Activated T-helper 1 cell treated with anti-CD3 and anti-CD28 coated beads, Interleukin-12 subunit alpha, Interleukin-12 subunit beta, Interleukin-2, Interleukin-4 antibody, amounts not matched to agents 30 ng/mL and 10 ng/mL and 1 ng/mL, durations not matched to agents 14 hours and 24 hours and 36 hours (primary cell): ENCODE measurements at regions of chr4 and their contacts with region 1.

Region 1: DNA sequence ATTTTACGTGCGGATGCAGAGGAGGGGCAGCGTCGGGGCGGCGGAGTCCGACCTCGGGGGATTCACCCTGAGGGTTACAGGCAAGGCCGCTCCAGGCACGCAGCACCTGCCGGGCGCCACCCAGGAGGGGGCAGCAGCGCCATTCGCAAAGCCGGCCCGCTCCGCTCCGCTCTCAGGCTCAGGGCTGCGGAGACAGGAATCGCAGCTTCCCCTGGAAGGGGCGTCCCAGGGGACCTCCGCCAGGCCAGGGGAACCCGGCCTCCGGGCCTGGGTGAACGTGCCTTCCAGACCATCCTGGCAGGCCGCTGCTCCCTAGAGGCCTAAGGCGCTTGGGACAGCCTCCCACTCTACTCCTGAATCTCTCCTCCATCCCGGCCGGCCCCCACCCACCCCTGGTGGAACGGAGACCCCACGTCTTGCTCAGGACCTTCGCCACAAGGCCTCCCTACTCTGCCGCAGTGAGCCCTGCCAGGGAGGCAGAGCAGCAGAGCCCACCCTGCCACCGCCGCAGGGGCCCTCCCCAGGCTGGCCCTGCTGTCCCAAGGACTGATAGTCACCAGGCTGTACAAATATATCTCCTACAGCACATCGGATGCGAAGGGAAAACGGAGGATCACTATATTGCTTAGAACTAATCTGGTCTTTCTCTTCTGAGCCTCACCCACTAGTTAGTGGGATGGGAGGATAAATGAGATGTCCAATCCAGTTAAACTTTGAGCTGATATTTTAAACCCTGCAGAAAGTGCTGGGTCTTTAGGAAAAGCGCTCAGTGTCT is 115.0 kb downstream of the SMIM20 start:
- DNase-seq: peak; percentile 60
- H3K4me3 Mint-ChIP-seq: no peak overlapping the region
- H3K27ac Mint-ChIP-seq: peak overlapping the region; percentile 65
- H3K4me1 Mint-ChIP-seq: peaks cover 19% of the 10 kb centered on the region
- H3K27me3 Mint-ChIP-seq: no peaks in the 10 kb centered on the region

Region 2: DNA sequence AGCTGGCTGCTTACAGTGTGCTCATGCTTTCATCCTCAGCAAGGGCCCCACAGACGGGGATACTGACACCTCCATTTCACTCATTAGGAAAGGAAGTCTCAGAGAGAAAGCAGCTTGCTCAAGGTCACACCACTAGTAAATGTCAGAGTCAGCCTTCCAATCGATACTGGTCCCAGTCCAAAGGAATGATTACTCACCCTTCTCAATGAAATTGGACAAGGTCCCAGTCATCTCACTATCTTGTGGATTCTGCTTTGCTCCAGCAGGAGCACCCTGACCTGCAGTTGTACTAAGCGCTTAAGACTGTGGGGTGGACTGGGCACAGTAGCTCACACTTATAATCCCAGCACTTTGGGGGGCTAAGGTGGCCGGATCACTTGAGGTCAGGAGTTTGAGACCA is 505.6 kb before region 1 on chr4:
- intact Hi-C with region 1: no loop called
- DNase-seq: no peak
- H3K4me3 Mint-ChIP-seq: no peak overlapping the region
- H3K27ac Mint-ChIP-seq: no peak overlapping the region
- H3K4me1 Mint-ChIP-seq: no peaks in the 10 kb centered on the region
- H3K27me3 Mint-ChIP-seq: no peaks in the 10 kb centered on the region

Region 3: GRCh38 chr4:25993395-25994185 is 35.4 kb before region 1 on chr4:
- intact Hi-C with region 1: loop called (anchors 1 kb)
- DNase-seq: no peak
- H3K4me3 Mint-ChIP-seq: no peak overlapping the region
- H3K27ac Mint-ChIP-seq: no peak overlapping the region
- H3K4me1 Mint-ChIP-seq: peaks cover 13% of the 10 kb centered on the region
- H3K27me3 Mint-ChIP-seq: peaks cover 2% of the 10 kb centered on the region

Region 4: GRCh38 chr4:26267087-26267486 is 238.1 kb after region 1 on chr4:
- intact Hi-C with region 1: no loop called
- DNase-seq: no peak
- H3K4me3 Mint-ChIP-seq: no peak overlapping the region
- H3K27ac Mint-ChIP-seq: no peak overlapping the region
- H3K4me1 Mint-ChIP-seq: peaks cover 17% of the 10 kb centered on the region
- H3K27me3 Mint-ChIP-seq: peaks cover 5% of the 10 kb centered on the region

Region 5: DNA sequence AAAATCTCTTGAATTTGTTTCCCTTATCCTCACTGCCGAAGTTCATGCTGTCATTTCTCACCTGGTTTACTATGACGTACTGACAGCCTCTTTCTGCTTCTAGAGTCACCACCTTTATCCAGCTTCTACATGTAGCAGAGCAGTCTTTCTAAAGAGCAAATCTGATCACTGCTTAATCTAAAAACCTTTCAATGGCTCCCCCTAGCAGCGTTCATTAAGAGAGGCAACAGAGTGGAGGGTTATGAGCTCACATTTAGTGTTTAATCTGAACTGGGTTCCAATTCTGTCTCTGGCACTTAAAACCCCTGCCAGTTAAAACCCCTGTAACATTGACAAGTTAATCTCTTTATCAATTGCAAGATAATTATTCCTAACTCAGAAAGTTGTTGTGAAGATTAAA is 296.2 kb after region 1 on chr4:
- intact Hi-C with region 1: loop called (anchors 1 kb)
- DNase-seq: peak; percentile 24
- H3K4me3 Mint-ChIP-seq: peak overlapping the region; percentile 85
- H3K27ac Mint-ChIP-seq: peak overlapping the region; percentile 80
- H3K4me1 Mint-ChIP-seq: peaks cover 47% of the 10 kb centered on the region
- H3K27me3 Mint-ChIP-seq: no peaks in the 10 kb centered on the region

Region 6: DNA sequence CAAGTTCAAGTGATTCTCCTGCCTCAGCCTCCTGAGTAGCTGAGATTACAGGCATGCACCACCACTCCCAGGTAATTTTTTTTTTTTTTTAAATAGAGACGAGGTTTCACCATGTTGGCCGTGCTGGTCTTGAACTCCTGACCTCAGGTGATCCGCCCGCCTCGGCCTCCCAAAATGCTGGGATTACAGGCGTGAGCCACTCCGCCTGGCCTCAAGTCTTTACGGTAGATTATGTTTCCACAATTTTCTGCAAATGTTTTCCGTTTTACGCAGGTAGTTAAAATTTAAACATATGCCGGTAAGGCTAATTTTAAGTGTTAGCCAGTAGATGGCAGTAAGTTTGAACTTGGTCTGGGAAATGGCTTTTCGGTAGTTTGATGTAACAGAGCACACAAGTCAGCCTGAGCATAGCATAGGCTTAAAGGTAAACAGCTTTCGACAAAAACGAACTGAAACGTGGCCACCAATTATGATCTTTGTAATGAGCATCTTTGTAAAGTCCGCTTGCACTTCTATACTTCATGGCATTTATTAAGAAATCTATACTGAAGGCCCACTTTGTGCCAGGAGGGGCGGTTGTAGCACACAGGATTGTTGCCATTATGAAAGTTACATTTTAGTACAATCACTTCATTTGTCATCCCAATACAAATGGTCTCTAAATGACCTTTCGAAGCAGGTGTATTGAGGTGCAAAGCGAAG is 430.2 kb after region 1 on chr4:
- intact Hi-C with region 1: loop called (anchors 1 kb)
- DNase-seq: no peak
- H3K4me3 Mint-ChIP-seq: no peak overlapping the region
- H3K27ac Mint-ChIP-seq: no peak overlapping the region
- H3K4me1 Mint-ChIP-seq: peaks cover 13% of the 10 kb centered on the region
- H3K27me3 Mint-ChIP-seq: peaks cover 2% of the 10 kb centered on the region

Region 7: DNA sequence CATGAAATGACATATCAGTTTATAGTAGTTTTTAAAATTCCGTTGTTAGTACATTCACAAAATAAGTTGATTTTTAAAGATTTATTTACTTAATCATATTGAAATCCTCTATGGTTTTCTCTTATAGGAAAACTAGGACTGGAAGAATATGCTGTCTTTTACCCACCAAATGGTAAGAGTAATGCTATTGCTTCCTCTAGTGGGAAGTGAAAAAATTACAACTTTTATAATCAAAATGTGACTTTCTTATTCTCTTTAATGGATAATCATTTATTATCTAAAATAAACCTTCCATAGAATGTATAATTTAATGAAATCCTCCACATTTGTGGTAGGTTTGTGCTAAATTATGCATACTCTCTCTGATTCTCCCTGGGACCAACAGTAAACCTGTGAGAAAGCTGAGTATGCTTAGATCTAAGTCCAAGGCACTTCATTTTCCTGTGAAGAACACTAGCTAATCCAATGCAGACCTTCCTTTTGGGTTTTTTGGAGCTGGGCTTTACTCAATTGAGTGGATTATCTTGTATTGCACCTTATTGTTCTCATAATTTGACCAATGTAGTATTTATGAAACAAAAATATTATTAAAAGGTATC is 691.1 kb after region 1 on chr4:
- intact Hi-C with region 1: loop called (anchors 5 kb)
- DNase-seq: no peak
- H3K4me3 Mint-ChIP-seq: no peak overlapping the region
- H3K27ac Mint-ChIP-seq: no peak overlapping the region
- H3K4me1 Mint-ChIP-seq: no peaks in the 10 kb centered on the region
- H3K27me3 Mint-ChIP-seq: peaks cover 2% of the 10 kb centered on the region